ENCODE measurements at regions of chr10 and their contacts with region 1.

Region 1: DNA sequence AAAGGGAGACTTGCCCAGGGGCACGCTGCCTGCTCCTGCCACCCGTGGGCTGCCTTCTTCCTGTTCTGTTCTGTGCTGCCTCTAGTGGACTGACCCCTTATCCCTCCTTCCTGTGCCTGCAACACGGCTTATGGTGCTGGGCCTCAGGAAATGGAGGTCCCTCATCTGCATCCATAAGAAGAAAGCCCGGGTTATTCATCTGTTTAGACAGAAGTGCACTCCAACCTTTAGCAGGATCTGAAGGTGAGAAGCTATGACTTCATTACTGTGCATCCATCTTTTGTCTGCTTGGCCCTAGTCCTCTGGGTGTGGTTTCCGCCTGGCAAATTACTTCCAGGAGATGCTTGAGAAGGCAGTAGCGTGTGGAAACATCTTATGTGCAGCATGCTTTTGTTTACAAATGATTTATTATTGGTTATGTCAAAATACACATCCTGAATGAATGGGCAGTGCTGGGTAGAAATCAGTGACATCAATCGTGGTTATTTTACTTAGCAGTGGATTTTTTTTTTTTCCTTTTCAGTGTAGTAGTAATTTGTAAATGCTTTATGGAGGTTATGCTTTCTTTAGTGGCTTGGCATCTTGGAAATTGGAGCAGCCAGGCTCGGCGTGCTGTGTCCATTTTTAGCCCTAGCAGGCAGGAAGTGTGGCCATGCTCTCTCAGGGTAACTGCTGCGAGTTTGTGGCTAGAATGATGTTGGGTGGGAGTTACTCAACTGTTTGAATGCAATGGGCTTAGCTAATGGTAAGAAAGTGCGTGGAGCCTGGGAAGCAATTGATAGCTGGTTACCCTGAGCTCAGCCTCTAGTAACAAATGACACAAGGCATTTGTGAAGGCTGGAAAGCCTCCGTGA is 12.7 kb downstream of the PTPRE start:
- DNase-seq: peak in 3 of 7 donors; percentile 30 to 56 (median 35)
- H3K4me3 ChIP-seq: no peak overlapping the region
- H3K27ac ChIP-seq: peak overlapping the region in 2 of 5 donors; percentile 71 to 83
- H3K4me1 ChIP-seq: peaks cover 27 to 60% of the 10 kb centered on the region in 2 donors
- H3K27me3 ChIP-seq: no peaks in the 10 kb centered on the region
- CTCF ChIP-seq: peak in 2 of 6 experiments; percentile 11 to 14
- POLR2A ChIP-seq: no peak

Region 2: GRCh38 chr10:127853868-127854768 is 65.5 kb before region 1 on chr10:
- intact Hi-C with region 1: no loop called
- DNase-seq: peak; percentile 56 to 81 (median 74)
- H3K4me3 ChIP-seq: no peak overlapping the region
- H3K27ac ChIP-seq: no peak overlapping the region
- H3K4me1 ChIP-seq: no peaks in the 10 kb centered on the region
- H3K27me3 ChIP-seq: no peaks in the 10 kb centered on the region
- CTCF ChIP-seq: peak; percentile 55 to 89 (median 84)
- POLR2A ChIP-seq: no peak

Region 3: GRCh38 chr10:127880557-127880956 is 39.1 kb before region 1 on chr10:
- intact Hi-C with region 1: no loop called
- DNase-seq: peak in 3 of 7 donors; percentile 37 to 69 (median 49)
- H3K4me3 ChIP-seq: no peak overlapping the region
- H3K27ac ChIP-seq: peak overlapping the region in 3 of 5 donors; percentile 36 to 76 (median 48)
- H3K4me1 ChIP-seq: peaks cover 0 to 6% of the 10 kb centered on the region in 2 donors
- H3K27me3 ChIP-seq: no peaks in the 10 kb centered on the region
- CTCF ChIP-seq: no peak
- POLR2A ChIP-seq: no peak

Region 4: GRCh38 chr10:127977357-127978009 is 57.8 kb after region 1 on chr10:
- intact Hi-C with region 1: loop called in 1 of 2 experiments (anchors 10 kb)
- DNase-seq: peak; percentile 87 to 96 (median 95)
- H3K4me3 ChIP-seq: peak overlapping the region in 1 of 4 donors; percentile 15
- H3K27ac ChIP-seq: peak overlapping the region; percentile 70 to 86 (median 84)
- H3K4me1 ChIP-seq: peaks cover 29 to 52% of the 10 kb centered on the region in 2 donors
- H3K27me3 ChIP-seq: no peaks in the 10 kb centered on the region
- CTCF ChIP-seq: no peak
- POLR2A ChIP-seq: peak in 1 of 2 donors; percentile 74

Region 5: DNA sequence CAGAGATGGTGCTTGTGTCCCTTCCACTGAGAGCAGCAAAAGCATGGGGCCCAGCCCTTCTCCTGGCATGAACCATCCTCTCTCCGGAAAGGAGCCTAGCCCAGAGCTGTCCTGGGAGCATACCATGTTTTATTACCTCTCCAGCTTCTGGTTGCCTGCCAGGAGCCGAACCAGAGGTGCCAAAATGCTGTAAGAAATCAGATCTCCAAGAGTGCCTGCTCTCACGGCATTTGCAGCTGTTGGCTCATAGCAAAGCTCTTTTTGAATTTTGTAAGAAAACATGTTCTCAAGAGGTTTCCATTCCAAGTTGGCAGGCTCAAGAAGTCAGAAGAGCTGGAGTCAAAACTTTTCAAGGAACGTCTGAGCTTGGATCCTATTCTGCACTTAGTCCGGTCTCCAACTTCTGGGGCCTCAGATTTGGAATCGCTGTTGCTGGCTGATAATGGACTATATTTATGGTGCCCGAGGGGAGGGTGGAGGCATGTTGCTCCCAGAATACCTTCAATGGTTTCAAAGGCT is 418.3 kb after region 1 on chr10:
- intact Hi-C with region 1: no loop called
- DNase-seq: no peak
- H3K4me3 ChIP-seq: no peak overlapping the region
- H3K27ac ChIP-seq: no peak overlapping the region
- H3K4me1 ChIP-seq: no peaks in the 10 kb centered on the region
- H3K27me3 ChIP-seq: peaks cover 8% of the 10 kb centered on the region
- CTCF ChIP-seq: no peak
- POLR2A ChIP-seq: no peak

Measured in adrenal gland (tissue), 19 donors.